Mucosa of descending colon (tissue), 3 donors: ENCODE measurements at regions of chr15 and their contacts with region 1.

Region 1: GRCh38 chr15:31326156-31326732 is 391 bp upstream of the KLF13 start:
- DNase-seq: peak; percentile 99 to 100 (median 99)
- ATAC-seq: peak; percentile 81
- H3K4me3 ChIP-seq: peak overlapping the region; percentile 74
- H3K4me1 ChIP-seq: peaks cover 19% of the 10 kb centered on the region
- CTCF ChIP-seq: no peak

Region 2: GRCh38 chr15:31215490-31216214 is 110.6 kb before region 1 on chr15:
- intact Hi-C with region 1: loop called in 1 of 2 experiments (anchors 5 kb)
- DNase-seq: peak; percentile 91 to 95 (median 94)
- ATAC-seq: peak; percentile 86
- H3K4me3 ChIP-seq: peak overlapping the region; percentile 14
- H3K4me1 ChIP-seq: peaks cover 24% of the 10 kb centered on the region
- CTCF ChIP-seq: peak; percentile 96